Heart right ventricle (tissue), 16 donors: ENCODE measurements at regions of chr18 and their contacts with region 1.

Region 1: GRCh38 chr18:22813648-22814328 is 119.3 kb upstream of the RBBP8 start:
- DNase-seq: no peak
- ATAC-seq: no peak
- H3K4me3 ChIP-seq: no peak overlapping the region
- H3K27ac ChIP-seq: no peak overlapping the region
- H3K4me1 ChIP-seq: no peaks in the 10 kb centered on the region
- H3K27me3 ChIP-seq: peaks cover 0 to 14% (median 7%) of the 10 kb centered on the region in 7 donors
- CTCF ChIP-seq: peak in 8 of 9 donors; percentile 23 to 74 (median 58)

Region 2: DNA sequence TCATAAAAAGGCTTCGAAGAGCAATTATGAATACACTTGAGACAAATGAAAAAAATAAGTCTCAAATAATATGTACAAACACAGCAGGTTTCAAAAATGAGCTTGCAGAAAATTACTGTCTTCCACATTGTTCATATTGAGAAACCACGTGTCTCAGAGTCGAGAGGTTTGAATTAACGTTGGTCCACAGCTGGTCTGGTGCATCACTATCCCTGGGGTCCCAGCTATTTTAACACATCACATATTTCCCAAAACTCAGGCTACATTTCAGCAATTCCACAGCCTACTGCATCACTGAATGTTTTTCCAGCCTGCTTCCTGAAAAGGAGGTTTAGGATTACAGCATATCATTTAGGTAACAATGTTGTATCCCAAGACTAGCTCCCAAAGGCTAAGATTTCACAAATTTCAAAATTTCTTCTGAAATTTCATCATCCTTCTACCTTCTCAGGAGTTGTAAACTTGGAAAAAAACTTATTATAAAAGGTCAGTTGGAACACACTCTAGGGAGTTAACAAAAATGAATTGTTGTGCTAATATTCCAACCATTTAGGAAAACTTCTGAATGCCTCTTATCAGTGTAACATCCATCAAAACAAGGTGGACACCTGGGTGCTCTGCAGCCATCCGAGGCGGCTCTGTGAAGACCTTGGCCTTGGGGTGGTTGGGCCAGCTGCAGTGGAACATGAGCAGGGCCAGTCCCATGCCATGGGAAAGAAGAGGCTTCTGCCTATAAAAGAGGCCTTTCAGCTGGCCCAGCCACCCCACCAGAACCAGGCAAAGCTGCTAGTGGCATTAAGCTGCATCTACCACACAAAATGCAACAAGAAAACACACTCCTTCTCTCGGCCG is 78.8 kb before region 1 on chr18:
- intact Hi-C with region 1: no loop called
- DNase-seq: no peak
- ATAC-seq: peak in 6 of 8 donors; percentile 31 to 91 (median 50)
- H3K4me3 ChIP-seq: no peak overlapping the region
- H3K27ac ChIP-seq: peak overlapping the region in 2 of 10 donors; percentile 12 to 65
- H3K4me1 ChIP-seq: peaks cover 0 to 10% (median 0%) of the 10 kb centered on the region in 9 donors
- H3K27me3 ChIP-seq: no peaks in the 10 kb centered on the region
- CTCF ChIP-seq: no peak

Region 3: GRCh38 chr18:23416298-23416697 is 602.5 kb after region 1 on chr18:
- intact Hi-C with region 1: loop called in 2 of 10 experiments (anchors 5 to 10 kb)
- DNase-seq: no peak
- ATAC-seq: peak in 7 of 8 donors; percentile 21 to 66 (median 31)
- H3K4me3 ChIP-seq: no peak overlapping the region
- H3K27ac ChIP-seq: peak overlapping the region in 2 of 10 donors; percentile 10 to 44
- H3K4me1 ChIP-seq: peaks cover 0 to 14% (median 0%) of the 10 kb centered on the region in 9 donors
- H3K27me3 ChIP-seq: no peaks in the 10 kb centered on the region
- CTCF ChIP-seq: no peak